ENCODE measurements at regions of chr5 and their contacts with region 1.

Region 1: GRCh38 chr5:154995679-154996078 is 17.9 kb upstream of the KIF4B start:
- DNase-seq: peak; percentile 39
- H3K4me3 ChIP-seq: no peak overlapping the region
- H3K27ac ChIP-seq: no peak overlapping the region
- H3K4me1 ChIP-seq: peaks cover 15% of the 10 kb centered on the region
- H3K27me3 ChIP-seq: no peaks in the 10 kb centered on the region
- CTCF ChIP-seq: peak; percentile 16 to 36
- POLR2A ChIP-seq: no peak

Region 2: GRCh38 chr5:155040984-155041653 is 45.4 kb after region 1 on chr5:
- CTCF ChIA-PET with region 1: no interaction called
- POLR2A ChIA-PET with region 1: no interaction called
- dilution Hi-C with region 1: no loop called
- intact Hi-C with region 1: loop called (anchors 1 kb)
- DNase-seq: peak; percentile 33
- H3K4me3 ChIP-seq: no peak overlapping the region
- H3K27ac ChIP-seq: no peak overlapping the region
- H3K4me1 ChIP-seq: no peaks in the 10 kb centered on the region
- H3K27me3 ChIP-seq: no peaks in the 10 kb centered on the region
- CTCF ChIP-seq: no peak
- POLR2A ChIP-seq: no peak

Region 3: GRCh38 chr5:155082401-155082800 is 86.7 kb after region 1 on chr5:
- CTCF ChIA-PET with region 1: no interaction called
- POLR2A ChIA-PET with region 1: no interaction called
- dilution Hi-C with region 1: no loop called
- intact Hi-C with region 1: loop called (anchors 5 kb)
- DNase-seq: peak; percentile 63
- H3K4me3 ChIP-seq: no peak overlapping the region
- H3K27ac ChIP-seq: peak overlapping the region; percentile 60
- H3K4me1 ChIP-seq: peaks cover 17% of the 10 kb centered on the region
- H3K27me3 ChIP-seq: no peaks in the 10 kb centered on the region
- CTCF ChIP-seq: no peak
- POLR2A ChIP-seq: no peak

Region 4: DNA sequence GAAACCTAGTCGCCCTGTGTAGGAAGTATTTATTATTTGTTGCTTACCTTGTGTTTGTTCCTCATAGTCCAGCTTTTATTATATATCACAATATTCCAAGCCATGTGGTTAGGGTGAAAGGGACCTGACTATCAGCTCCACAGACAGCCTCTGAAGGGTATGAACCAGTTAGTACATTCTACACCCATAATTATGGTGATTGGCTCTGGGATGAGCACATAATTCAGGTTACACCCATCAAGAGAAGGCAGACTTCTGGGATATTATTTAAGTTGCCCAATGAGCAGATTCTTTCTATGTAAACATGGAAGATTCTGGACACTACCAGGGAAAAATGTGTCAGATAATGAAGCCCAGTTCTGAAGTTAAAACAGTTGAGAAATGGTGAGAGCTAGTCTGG is 185.9 kb after region 1 on chr5:
- CTCF ChIA-PET with region 1: no interaction called
- POLR2A ChIA-PET with region 1: no interaction called
- dilution Hi-C with region 1: no loop called
- intact Hi-C with region 1: no loop called
- DNase-seq: no peak
- H3K4me3 ChIP-seq: no peak overlapping the region
- H3K27ac ChIP-seq: no peak overlapping the region
- H3K4me1 ChIP-seq: no peaks in the 10 kb centered on the region
- H3K27me3 ChIP-seq: no peaks in the 10 kb centered on the region
- CTCF ChIP-seq: no peak
- POLR2A ChIP-seq: no peak

Measured in endothelial cell of umbilical vein (primary cell).